Psoas muscle (tissue), 8 donors: ENCODE measurements at regions of chr1 and their contacts with region 1.

Region 1: DNA sequence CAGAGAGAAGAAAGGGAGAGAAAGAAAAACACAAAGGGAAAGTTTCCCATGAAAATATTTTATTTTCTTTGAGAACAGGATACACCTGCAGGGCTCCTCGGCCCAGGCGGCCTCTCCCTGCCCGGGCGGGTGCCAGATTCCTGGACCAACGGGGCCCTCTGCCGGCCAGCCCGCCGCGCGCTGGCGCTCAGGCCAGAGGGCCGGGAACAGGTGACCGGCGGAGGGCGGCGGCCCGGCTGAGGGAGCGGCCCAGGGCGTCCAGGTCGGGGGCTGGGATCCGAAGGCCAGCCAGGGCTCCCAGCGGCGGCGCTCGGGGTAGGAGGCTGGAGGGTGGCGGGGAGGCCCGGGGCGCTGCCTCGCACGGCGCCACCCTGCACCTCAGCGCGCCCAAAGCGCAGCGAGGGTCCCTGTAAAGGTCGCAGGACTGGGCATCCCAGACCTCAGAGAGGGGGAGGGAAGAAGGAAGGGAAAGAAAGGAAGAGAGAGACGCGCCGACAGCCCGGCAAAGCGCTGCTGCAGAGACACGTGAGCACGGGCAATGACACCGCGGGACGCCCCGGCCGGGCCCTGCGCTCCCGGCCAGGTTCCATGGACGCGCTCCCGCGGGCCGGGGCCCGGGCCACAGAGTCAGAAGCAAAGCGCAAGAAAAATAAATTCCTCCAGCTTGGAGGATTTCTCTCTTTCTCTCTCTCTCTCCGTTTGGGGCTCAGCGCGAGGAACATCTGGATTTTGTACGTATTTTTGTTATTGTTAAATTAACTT is 927 bp downstream of the WNT9A start:
- DNase-seq: peak; percentile 84 to 90
- ATAC-seq: peak; percentile 68 to 77 (median 72)
- H3K4me3 ChIP-seq: peak overlapping the region; percentile 80
- H3K27ac ChIP-seq: peak overlapping the region; percentile 89
- H3K4me1 ChIP-seq: peaks cover 41% of the 10 kb centered on the region
- H3K27me3 ChIP-seq: no peaks in the 10 kb centered on the region
- CTCF ChIP-seq: peak; percentile 78

Region 2: DNA sequence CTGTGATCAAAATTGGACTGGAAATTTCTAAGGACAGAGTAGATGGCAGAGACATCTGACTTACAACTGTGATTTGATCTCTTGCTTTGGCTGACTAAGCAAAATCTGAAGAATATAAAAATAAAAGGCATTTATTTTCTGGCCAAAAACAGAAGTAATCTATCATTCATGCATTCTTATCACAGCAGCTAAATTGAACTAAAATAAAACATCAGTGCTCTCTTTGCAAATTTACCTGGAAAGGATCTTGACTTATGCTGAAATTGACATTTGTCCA is 464.8 kb before region 1 on chr1:
- intact Hi-C with region 1: loop called (anchors 2 to 5 kb)
- DNase-seq: no peak
- ATAC-seq: no peak
- H3K4me3 ChIP-seq: no peak overlapping the region
- H3K27ac ChIP-seq: no peak overlapping the region
- H3K4me1 ChIP-seq: no peaks in the 10 kb centered on the region
- H3K27me3 ChIP-seq: no peaks in the 10 kb centered on the region
- CTCF ChIP-seq: no peak

Region 3: DNA sequence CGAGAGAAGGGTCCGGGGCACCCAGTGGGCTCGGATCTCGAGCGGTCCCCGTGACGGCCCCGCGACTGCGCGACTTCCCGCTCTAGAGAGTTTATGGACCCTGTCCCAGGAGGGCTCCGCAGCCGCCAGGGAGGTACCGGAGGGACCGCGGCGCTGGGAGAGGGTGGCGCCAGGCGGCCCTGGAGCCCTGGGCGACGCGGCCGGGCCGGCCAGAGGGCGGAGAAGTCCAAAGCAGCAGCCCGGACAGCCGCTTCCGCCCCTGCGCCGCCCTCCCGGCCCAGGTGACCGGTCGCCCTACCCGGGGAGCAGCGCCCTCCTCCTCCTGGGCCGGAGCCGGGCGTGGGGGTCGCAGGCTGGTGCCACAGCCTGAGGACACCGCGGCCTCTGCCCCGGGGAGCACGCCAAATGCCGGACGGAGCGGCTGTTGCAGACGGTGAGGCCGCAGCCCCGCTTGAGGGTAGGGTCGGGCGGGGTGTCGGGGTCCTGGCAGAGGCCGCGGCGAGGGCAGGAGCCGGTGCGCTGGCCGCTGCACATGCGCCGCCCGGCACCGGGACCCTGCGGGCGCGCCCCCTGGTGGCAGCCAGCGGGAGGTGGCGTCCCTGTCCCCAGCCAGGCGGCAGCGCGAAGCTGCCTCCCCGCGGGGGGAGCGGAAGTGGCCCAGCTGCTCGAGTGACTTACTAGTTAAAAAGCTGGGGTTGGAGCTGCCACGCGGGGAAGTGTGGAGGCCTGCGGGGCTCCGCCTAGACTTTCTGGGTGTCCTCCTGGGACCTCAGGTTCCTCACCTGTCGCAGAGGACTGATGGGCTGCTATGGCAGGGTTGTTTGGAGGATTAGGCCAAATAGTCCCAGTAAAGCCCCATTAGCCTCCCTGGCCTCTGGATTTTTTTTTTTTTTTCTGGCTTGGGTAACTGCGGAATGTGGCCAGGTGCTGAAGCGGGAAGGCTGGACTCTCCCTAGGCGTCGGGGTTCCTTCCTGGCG is 404.4 kb before region 1 on chr1:
- intact Hi-C with region 1: loop called (anchors 5 kb)
- DNase-seq: peak; percentile 91 to 95
- ATAC-seq: peak; percentile 96 to 99 (median 98)
- H3K4me3 ChIP-seq: peak overlapping the region; percentile 94
- H3K27ac ChIP-seq: peak overlapping the region; percentile 83
- H3K4me1 ChIP-seq: peaks cover 8% of the 10 kb centered on the region
- H3K27me3 ChIP-seq: no peaks in the 10 kb centered on the region
- CTCF ChIP-seq: peak; percentile 99

Region 4: GRCh38 chr1:227547310-227548118 is 399.3 kb before region 1 on chr1:
- intact Hi-C with region 1: loop called (anchors 5 kb)
- DNase-seq: no peak
- ATAC-seq: no peak
- H3K4me3 ChIP-seq: no peak overlapping the region
- H3K27ac ChIP-seq: no peak overlapping the region
- H3K4me1 ChIP-seq: no peaks in the 10 kb centered on the region
- H3K27me3 ChIP-seq: no peaks in the 10 kb centered on the region
- CTCF ChIP-seq: no peak

Region 5: DNA sequence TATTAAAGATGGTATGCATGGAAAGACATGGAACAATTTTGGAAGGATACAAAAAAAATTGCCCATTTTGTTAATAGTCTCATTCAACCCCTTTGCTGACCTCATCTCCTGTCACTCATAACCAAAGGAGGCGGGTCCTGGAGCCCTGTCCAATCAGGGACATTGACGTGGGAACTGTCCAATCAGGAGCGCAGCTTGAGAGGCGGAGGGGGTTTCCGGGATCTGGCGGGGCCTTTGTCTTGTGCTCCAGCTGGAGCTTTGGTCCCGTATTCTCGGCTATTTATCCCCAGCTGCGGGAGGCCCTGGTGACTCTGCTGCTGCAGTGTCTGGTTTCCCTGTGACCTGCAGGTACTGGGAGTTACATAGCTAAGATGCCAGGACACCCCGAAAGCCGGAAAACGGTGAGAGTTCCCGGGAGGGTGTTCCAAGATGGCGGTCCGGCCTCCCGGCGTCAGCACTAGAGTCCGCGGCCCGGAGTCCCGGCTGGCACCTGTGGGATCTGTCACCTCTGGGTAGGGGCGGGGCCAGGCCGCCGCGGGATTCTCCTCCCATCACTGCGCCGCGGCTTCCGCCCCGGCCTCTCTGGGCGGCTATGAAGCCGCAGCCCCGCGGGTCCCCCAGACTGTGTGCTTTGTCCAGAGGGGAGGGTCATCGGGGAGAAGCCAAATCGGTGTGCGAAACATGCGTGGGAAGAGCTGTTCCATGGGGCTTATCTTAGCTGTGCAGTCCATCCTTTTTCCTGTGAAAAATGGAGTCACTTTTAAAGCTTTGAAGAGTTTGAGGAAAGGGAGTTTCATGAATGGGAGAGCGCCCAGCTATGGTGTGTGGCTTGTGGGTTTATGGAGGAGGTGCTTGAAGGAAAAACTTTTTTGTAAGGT is 383.2 kb before region 1 on chr1 and contains the start of gene ZNF678:
- intact Hi-C with region 1: no loop called
- DNase-seq: peak; percentile 91 to 94
- ATAC-seq: peak; percentile 97 to 99 (median 98)
- H3K4me3 ChIP-seq: peak within 1 kb of the TSS; percentile 75
- H3K27ac ChIP-seq: peak within 1 kb of the TSS; percentile 80
- H3K4me1 ChIP-seq: peaks cover 3% of the 10 kb centered on the region
- H3K27me3 ChIP-seq: peaks cover 0 to 25% (median 14%) of the 10 kb centered on the region in 3 donors
- CTCF ChIP-seq: no peak
- total RNA-seq, gene ZNF678: 3.0 to 5.0 (median 4.2) TPM

Region 6: DNA sequence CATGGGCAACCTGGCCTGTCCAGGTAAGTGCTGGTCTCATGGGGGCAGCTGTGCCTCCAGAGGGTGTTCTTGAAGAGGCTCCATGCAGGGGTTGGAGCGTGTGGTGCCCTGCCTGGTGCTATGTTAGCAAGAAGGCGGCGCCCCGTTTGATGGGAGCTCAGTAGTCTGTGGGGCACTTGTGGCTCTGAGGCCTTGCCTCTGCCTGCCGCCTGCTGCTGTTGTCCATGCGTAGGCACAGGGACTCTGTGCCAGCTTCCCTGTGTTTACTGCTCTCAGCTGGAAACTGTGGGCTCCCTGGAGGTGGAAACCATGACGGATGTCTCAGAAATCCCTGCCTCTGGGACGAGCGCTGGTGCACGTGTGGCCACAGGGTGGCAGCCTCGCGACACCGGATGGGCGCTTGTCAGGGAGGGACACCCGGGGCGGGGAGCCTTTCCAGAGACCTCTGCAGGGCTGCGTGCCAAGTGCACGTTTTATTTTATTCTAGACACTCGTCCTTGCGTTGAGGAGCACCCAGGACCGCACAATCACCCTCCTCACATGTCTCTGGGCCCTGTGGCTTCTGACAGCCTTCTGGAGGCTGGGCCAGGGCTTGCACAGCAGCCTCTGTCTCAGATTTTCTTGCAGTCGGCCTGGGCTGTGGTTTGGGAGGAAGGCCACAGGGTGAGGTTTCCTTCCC is 184.4 kb before region 1 on chr1:
- intact Hi-C with region 1: loop called (anchors 1 to 2 kb)
- DNase-seq: peak; percentile 88 to 92
- ATAC-seq: peak; percentile 71 to 82 (median 79)
- H3K4me3 ChIP-seq: peak overlapping the region; percentile 22
- H3K27ac ChIP-seq: peak overlapping the region; percentile 90
- H3K4me1 ChIP-seq: peaks cover 62% of the 10 kb centered on the region
- H3K27me3 ChIP-seq: no peaks in the 10 kb centered on the region
- CTCF ChIP-seq: peak; percentile 89